K562 (cell line): ENCODE measurements at regions of chr19 and their contacts with region 1.

Region 1: DNA sequence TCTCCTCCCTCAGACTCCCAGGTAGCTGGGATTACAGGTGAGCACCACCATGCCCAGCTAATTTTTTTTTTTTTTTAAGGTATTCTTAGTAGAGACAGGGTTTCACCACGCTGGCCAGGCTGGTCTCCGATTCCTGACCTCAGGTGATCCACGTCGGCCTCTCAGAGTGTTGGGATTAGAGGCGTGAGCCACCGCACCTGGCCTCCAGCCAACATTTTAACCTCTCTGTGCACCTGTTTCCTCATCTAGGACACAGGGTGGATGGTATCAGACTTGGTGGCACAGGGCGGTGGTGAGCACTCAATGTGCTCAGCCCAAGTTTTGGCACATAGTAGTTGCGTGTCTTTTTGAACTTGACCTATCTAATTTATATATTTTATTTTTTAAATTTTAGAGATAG is 12.5 kb downstream of the APBA3 start:
- DNase-seq: no peak
- ATAC-seq: no peak
- H3K4me3 ChIP-seq: no peak overlapping the region
- H3K27ac ChIP-seq: no peak overlapping the region
- H3K4me1 ChIP-seq: peaks cover 0 to 23% of the 10 kb centered on the region in 2 experiments; a peak in 2 of 5 replicates
- H3K27me3 ChIP-seq: no peaks in the 10 kb centered on the region
- CTCF ChIP-seq: no peak
- EP300 ChIP-seq: no peak
- POLR2A ChIP-seq: no peak
- RAD21 ChIP-seq: no peak

Region 2: DNA sequence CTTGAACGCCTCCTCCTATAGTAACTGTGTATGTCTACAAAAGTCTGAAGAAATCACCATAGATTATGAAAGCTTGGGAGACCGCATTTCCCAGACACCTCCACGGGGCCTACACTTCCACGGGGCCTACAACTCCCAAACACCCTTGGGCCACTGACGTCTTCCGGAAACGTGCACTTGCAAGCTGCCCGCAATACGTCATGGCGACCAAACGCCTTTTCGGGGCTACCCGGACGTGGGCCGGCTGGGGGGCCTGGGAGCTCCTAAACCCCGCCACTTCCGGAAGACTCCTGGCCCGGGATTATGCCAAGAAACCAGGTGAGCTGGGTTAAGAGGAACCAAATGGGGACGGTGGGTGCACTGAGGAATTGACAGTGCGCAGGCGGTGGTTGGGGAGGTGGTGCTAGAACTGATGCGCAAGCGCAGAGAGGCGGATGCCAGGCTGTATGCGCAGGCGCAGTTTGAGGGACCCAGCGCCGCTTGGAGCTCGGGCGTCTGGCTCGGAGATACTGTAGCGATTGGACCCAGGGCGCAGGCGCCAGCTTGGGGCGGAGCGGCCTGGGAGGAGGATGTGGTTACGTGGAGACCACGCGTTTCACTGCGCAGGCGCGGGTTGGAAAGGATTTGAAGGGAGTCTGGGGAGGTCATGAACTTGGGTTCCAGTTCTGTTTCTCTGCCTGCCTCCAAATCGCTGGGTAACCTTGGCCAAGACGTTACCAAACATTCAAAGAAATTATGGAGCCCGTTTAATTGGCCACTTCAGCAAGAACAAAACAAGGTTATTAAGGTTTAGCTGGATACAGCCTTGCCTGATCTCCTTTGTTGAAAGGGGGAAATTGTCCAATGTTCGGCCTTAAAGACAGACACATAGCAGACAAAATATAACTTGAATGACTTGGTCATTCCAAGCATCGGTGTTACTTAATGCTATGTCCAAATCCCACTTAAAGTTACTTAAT is 13.8 kb after region 1 on chr19 and contains the start of gene MRPL54:
- CTCF ChIA-PET with region 1: no interaction called
- POLR2A ChIA-PET with region 1: interaction called, 10 read pairs
- in situ Hi-C with region 1: no loop called
- intact Hi-C with region 1: no loop called
- DNase-seq: peak; percentile 99 to 100 (median 99)
- ATAC-seq: peak; percentile 92
- H3K4me3 ChIP-seq: peak within 1 kb of the TSS; percentile 100
- H3K27ac ChIP-seq: peak within 1 kb of the TSS; percentile 99
- H3K4me1 ChIP-seq: peaks cover 8 to 37% of the 10 kb centered on the region in 2 experiments; a peak in 4 of 5 replicates
- H3K27me3 ChIP-seq: no peaks in the 10 kb centered on the region
- CTCF ChIP-seq: no peak
- EP300 ChIP-seq: peak; percentile 33
- POLR2A ChIP-seq: peak; percentile 97
- RAD21 ChIP-seq: no peak
- polyA plus RNA-seq, gene MRPL54: 3.5 to 13.6 TPM